Activated CD4-positive, alpha-beta T cell treated with anti-CD3 and anti-CD28 coated beads, Interleukin-2, amount 10 ng/mL, durations not matched to agents 24 days and 14 days (primary cell): ENCODE measurements at regions of chr17 and their contacts with region 1.

Region 1: DNA sequence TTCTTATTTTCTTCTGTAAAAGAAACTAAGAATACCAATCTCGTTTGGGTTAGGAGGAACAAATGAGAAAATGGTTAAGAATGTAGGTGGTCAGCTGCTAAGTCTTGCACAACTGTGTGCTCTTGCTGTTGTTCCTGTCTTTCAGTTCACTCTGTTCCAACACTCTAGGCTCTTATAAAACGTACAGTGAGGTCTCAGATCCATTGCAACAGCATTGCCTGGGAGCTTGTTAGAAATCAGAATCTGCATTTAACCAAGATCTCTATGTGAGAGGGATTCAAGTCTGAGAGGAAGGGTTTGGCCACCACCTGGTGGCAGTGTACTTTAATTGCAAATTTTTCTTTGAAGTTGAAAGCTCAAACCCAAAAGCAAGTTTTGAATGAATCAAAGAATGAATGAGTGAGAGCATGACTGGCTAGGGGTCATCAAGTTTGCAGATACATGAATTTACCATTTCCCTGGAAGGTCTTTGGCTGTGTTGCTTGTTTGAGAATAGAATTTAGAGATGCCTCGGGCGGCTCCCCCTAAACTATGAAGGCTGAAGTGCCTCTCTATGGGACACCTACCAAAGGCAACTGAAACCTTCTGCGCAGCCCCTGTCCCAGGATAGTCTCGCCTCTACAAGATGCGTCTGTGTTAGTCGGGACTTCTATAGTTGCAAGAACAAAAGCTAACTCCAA is 2.5 kb downstream of the ALOX15B start:
- DNase-seq: peak; percentile 81
- H3K4me3 Mint-ChIP-seq: no peak overlapping the region
- H3K27ac Mint-ChIP-seq: no peak overlapping the region
- H3K4me1 Mint-ChIP-seq: peaks cover 2% of the 10 kb centered on the region
- H3K27me3 Mint-ChIP-seq: peaks cover 26% of the 10 kb centered on the region

Region 2: GRCh38 chr17:7915611-7916382 is 125.6 kb before region 1 on chr17 and contains the start of gene RNF227:
- intact Hi-C with region 1: loop called (anchors 1 kb)
- DNase-seq: peak; percentile 94
- H3K4me3 Mint-ChIP-seq: peak within 1 kb of the TSS; percentile 97
- H3K27ac Mint-ChIP-seq: peak within 1 kb of the TSS; percentile 97
- H3K4me1 Mint-ChIP-seq: peaks cover 26% of the 10 kb centered on the region
- H3K27me3 Mint-ChIP-seq: no peaks in the 10 kb centered on the region
- total RNA-seq, gene RNF227: 6.2 and 6.5 TPM in 2 replicates

Region 3: DNA sequence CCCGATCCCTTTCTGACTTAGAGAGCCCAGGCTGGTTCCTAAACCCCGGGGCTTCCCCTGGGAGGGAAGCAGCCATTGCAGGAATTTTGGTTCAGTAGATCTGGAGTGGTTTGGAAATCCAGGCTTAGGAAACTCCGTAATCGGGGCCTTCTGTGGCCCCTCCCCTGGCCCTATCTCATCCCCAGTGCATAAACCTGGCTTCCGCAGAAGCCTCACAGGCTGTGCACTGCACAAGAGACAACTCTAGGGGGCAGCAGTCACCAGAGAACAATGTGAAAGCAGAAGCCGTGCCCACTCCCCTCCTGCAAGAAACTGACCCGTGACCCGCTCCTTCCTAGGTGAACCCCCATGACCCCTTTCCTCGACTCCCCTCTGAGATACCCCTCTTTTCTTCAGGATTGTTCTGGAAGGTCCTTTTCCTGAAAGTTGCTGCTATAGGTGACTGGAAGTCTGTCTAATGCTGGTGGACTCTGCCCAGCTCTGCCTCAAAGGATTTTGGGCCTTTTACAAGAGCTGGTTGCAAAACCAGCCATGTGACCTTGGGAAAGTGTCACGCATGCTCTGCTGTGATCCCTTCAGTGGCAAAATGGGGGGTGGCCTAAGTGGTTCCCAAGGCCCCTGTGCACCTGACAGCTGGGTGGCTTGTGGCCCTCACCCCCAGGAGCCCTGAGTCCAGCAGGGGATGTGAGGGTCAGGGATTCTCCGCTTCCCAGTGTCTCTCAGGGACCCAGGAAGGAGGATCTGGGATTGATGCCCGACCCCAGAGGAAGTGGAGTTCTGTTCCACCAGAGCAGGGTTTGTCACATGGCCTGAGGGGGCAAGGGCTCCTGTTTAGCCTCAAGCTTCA is 24.5 kb before region 1 on chr17:
- intact Hi-C with region 1: loop called (anchors 1 kb)
- DNase-seq: peak; percentile 89
- H3K4me3 Mint-ChIP-seq: peak overlapping the region; percentile 80
- H3K27ac Mint-ChIP-seq: no peak overlapping the region
- H3K4me1 Mint-ChIP-seq: peaks cover 10% of the 10 kb centered on the region
- H3K27me3 Mint-ChIP-seq: peaks cover 17% of the 10 kb centered on the region